Activated CD8-positive, alpha-beta memory T cell treated with anti-CD3 and anti-CD28 coated beads, Interleukin-2, amount 10 ng/mL, durations not matched to agents 7 days and 5 days (primary cell): ENCODE measurements at regions of chr10 and their contacts with region 1.

Region 1: DNA sequence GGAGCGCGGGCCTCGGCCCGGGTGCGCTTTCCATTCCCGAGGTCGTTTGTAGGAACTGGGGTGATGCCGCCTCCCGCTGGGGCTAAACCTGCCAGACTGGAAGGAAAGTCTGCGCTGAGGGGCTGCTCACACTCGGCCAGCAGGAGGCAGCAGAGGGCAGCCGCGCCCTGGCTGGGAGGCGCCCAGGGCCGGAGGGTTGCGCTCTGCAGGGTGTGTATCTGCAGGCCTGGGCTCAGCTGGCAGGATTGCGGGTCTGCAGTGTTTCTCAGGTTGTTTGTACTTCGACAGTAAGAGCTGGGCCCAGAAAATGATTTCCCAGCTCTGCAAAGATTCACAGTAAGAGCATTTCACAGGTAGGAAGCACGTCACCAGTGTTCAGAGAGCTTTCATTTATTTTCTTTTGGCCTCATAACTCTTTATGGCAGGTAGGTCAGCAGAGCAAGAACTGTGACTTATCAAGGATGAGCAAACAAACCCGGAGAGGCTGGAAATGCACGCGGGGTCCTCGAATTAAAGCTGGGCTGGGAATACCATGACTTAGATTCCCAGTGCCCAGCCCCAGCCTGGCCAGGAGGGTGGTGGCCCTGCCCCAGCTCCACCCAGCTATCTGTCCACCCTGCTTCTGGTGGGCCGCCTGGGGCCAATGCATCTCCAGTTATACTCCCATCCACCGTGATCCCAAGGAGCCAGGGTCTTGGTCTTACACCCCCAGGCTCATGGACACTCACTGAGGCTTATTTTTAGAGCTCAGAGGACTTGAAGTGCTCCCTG is 15.2 kb upstream of the PPP2R2D start:
- DNase-seq: peak; percentile 82
- ATAC-seq: peak; percentile 96
- H3K4me3 Mint-ChIP-seq: no peak overlapping the region
- H3K27ac Mint-ChIP-seq: no peak overlapping the region
- H3K4me1 Mint-ChIP-seq: peaks cover 3% of the 10 kb centered on the region
- H3K27me3 Mint-ChIP-seq: peaks cover 5% of the 10 kb centered on the region

Region 2: GRCh38 chr10:131900350-131901146 is 15.0 kb after region 1 on chr10 and contains the start of gene PPP2R2D:
- CTCF ChIA-PET with region 1: interaction called, 22 read pairs
- DNase-seq: peak; percentile 96
- ATAC-seq: peak; percentile 86
- H3K4me3 Mint-ChIP-seq: peak within 1 kb of the TSS; percentile 82
- H3K27ac Mint-ChIP-seq: peak within 1 kb of the TSS; percentile 85
- H3K4me1 Mint-ChIP-seq: peaks cover 58% of the 10 kb centered on the region
- H3K27me3 Mint-ChIP-seq: peaks cover 13% of the 10 kb centered on the region
- total RNA-seq, gene PPP2R2D: 36.0 to 41.9 TPM

Region 3: DNA sequence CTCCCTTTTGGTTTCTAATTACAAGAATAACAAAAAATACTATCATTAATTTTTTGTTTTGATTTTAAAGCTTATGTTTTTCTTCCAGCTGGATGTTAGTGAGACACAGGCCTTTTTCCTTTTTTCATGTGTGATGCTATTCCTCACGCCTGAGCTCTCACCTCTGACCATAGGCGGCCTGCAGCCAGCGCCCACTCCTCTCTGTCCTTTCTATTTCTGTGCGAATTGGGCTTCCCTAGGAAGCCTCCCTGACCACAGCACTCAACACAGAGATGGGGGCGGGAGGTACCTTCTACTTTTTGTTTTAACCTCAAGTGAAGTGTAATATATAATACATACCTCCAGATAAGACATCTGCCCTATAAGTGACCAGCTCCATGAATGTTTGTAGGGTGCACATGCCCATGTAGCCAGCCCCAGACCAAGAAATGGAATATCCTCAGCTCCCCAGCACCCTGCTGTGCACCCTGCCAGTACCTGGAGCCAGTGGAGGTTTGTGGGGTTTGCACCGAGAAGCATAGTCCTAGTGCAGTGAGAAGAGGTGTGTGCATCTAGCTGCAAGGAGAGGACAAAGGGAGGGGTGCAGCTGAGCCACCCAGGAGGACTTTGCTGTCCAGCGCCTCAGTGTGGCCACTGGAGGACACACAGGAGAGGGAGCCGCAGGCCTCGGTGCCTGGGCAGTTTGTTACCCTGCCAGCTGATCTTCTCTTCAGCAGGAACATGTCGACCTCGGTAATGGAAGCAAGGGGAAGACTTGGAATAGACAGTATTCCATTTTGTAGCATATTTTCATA is 57.6 kb after region 1 on chr10:
- CTCF ChIA-PET with region 1: interaction called, 13 read pairs
- DNase-seq: no peak
- ATAC-seq: no peak
- H3K4me3 Mint-ChIP-seq: no peak overlapping the region
- H3K27ac Mint-ChIP-seq: no peak overlapping the region
- H3K4me1 Mint-ChIP-seq: peaks cover 2% of the 10 kb centered on the region
- H3K27me3 Mint-ChIP-seq: no peaks in the 10 kb centered on the region

Region 4: GRCh38 chr10:131972474-131973071 is 87.0 kb after region 1 on chr10:
- CTCF ChIA-PET with region 1: interaction called, 10 read pairs
- DNase-seq: peak; percentile 67
- ATAC-seq: peak; percentile 76
- H3K4me3 Mint-ChIP-seq: peak overlapping the region; percentile 65
- H3K27ac Mint-ChIP-seq: peak overlapping the region; percentile 80
- H3K4me1 Mint-ChIP-seq: peaks cover 55% of the 10 kb centered on the region
- H3K27me3 Mint-ChIP-seq: no peaks in the 10 kb centered on the region

Region 5: GRCh38 chr10:132023092-132023811 is 137.7 kb after region 1 on chr10:
- CTCF ChIA-PET with region 1: interaction called, 81 read pairs
- DNase-seq: peak; percentile 79
- ATAC-seq: peak; percentile 87
- H3K4me3 Mint-ChIP-seq: no peak overlapping the region
- H3K27ac Mint-ChIP-seq: no peak overlapping the region
- H3K4me1 Mint-ChIP-seq: peaks cover 9% of the 10 kb centered on the region
- H3K27me3 Mint-ChIP-seq: peaks cover 33% of the 10 kb centered on the region

Region 6: GRCh38 chr10:132142411-132143161 is 257.0 kb after region 1 on chr10:
- CTCF ChIA-PET with region 1: interaction called, 11 read pairs
- DNase-seq: peak; percentile 63
- ATAC-seq: peak; percentile 77
- H3K4me3 Mint-ChIP-seq: no peak overlapping the region
- H3K27ac Mint-ChIP-seq: no peak overlapping the region
- H3K4me1 Mint-ChIP-seq: no peaks in the 10 kb centered on the region
- H3K27me3 Mint-ChIP-seq: peaks cover 8% of the 10 kb centered on the region